ENCODE measurements at regions of chr20 and their contacts with region 1.

Region 1: GRCh38 chr20:63864847-63865640 is at the start of gene TPD52L2:
- DNase-seq: peak; percentile 100
- ATAC-seq: peak; percentile 82
- H3K4me3 ChIP-seq: peak within 1 kb of the TSS; percentile 98 to 100
- H3K27ac ChIP-seq: peak within 1 kb of the TSS; percentile 95
- H3K4me1 ChIP-seq: peaks cover 14 to 19% of the 10 kb centered on the region in 2 experiments
- H3K27me3 ChIP-seq: no peaks in the 10 kb centered on the region
- CTCF ChIP-seq: no peak
- POLR2A ChIP-seq: peak; percentile 77
- RAD21 ChIP-seq: no peak
- total RNA-seq, gene TPD52L2: 149 TPM

Region 2: DNA sequence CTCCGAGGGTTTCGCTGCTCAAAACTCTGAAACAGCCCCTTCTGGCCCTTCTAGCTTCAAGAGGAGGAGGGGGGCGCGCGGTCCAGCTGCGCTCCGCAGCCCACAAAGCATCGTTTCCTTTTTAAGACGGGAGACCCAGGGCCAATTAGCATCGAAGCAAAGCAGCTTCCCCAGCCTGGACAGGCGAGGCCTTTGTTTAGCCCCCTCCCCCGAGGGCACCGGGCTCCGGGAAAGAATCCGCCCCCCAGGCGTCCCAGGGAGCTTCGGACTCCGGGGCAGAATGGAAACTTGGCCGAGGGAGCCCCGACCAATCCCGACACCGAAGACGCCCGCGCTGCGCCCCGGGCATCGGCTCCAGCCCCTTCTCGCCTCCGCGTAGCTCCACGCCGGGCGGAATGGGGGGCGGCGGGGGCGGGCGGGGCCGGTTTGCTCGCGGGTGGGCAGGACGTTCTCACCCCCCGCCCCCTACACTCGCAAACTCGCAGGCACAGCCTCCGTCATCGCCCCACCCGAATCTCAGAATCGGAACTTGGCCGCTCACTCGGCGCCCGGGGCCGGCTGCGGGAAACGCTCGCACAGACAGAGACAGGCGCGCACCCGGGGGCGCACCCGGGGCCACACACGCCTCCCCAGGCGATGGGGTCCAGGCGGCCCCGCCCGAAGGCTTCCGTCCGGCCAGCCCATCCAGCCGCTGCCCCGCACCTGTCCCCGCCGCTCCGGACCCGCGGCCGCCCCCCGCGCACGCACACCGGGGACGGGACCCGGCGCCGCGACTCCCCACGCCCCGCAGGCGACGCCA is 611.4 kb before region 1 on chr20:
- CTCF ChIA-PET with region 1: no interaction called
- POLR2A ChIA-PET with region 1: no interaction called
- RAD21 ChIA-PET with region 1: no interaction called
- intact Hi-C with region 1: no loop called
- DNase-seq: no peak
- ATAC-seq: no peak
- H3K4me3 ChIP-seq: no peak overlapping the region
- H3K27ac ChIP-seq: no peak overlapping the region
- H3K4me1 ChIP-seq: no peaks in the 10 kb centered on the region
- H3K27me3 ChIP-seq: no peaks in the 10 kb centered on the region
- CTCF ChIP-seq: no peak
- POLR2A ChIP-seq: no peak
- RAD21 ChIP-seq: no peak

Region 3: DNA sequence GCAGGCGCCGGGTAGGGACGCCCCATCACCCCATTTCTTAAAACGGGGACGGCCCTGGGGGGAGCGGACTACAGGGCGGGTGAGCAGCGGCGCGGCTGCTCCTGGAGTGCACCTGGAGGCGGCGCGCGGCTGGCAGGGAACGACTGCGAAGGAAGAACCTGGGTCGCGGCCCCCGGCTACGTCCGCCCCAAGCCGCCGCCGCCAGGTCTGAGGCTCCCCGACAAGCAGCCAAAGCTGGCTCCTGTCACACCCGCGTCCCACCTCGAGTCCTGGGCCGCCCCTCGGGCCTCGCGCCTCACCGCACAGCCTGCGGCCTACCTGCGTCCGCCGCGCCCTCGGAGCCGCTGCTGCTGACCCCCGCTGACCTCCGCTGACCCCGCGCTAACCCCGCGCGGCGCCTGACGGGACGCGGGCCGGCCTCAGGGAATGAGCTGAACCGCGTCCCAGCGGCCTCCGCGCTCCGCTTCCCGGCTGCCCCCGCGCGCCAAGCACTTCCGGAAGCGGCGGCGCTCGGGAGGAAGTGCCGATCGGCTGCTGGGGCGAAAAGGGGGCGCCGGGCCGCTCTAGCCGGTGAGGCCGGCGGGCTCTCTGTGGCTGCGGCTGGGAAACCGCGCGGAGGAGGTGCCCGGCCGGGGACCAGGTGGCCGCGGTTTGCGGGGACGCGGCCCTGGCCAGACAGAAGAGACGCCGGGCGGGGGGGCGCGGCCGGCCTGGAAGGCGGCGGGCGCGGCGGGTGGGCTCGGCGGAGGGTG is 157.3 kb before region 1 on chr20 and contains the starts of genes ARFRP1 and ZGPAT:
- CTCF ChIA-PET with region 1: interaction called, 9 read pairs
- POLR2A ChIA-PET with region 1: interaction called, 15 read pairs
- RAD21 ChIA-PET with region 1: interaction called, 3 to 9 read pairs
- intact Hi-C with region 1: loop called (anchors 1 kb)
- DNase-seq: peak; percentile 47
- ATAC-seq: peak; percentile 85
- H3K4me3 ChIP-seq: peak within 1 kb of the TSS; percentile 85 to 96
- H3K27ac ChIP-seq: peak within 1 kb of the TSS; percentile 95
- H3K4me1 ChIP-seq: peaks cover 13 to 23% of the 10 kb centered on the region in 2 experiments
- H3K27me3 ChIP-seq: no peaks in the 10 kb centered on the region
- CTCF ChIP-seq: no peak
- POLR2A ChIP-seq: peak; percentile 53
- RAD21 ChIP-seq: no peak
- total RNA-seq, gene ARFRP1: 53.7 TPM
- total RNA-seq, gene ZGPAT: 30.6 TPM

Region 4: DNA sequence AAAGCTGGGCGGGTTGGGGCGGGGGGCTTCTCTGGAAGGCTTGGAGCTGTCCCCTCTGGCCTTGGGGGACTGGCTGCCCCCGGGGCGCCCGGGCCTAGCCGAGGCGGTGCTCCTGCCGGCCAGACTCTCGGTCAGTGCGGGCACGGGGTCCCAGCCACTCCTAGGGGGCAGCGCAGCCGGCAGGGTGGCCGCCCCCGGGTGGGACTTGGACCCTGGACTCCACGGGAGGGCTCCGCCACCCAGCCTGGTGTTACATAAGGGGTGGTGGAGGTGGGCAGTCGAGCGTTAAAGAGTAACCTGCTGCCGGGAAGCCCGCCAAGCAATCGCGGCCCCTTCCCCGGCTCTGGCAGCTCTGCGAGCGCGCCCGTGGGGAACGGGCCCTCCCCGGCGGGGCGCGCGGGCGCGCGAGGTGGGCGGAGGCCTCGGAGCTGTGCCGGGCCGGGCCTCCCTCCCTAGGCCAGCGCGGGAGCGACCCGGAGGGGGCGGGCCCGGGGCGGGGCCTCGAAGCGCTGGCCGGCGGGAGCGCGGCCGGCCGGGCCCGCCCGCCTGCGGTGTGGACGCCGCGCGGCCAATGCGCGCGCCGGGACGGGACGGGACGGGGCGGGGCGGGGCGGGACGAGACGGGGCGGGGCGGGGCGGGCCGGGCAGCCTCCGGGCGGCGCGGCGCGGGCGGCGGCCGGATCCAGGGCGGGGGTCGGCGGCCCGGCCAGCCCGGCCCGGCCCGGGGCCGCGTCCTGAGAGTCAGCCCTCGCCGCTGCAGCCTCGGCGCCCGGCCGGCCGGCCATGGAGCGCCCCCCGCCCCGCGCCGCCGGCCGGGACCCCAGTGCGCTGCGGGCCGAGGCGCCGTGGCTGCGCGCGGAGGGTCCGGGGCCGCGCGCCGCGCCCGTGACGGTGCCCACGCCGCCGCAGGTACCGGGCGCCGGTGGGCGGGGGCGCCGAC is 125.6 kb before region 1 on chr20 and contains the start of gene SLC2A4RG:
- CTCF ChIA-PET with region 1: interaction called, 5 read pairs
- POLR2A ChIA-PET with region 1: interaction called, 12 read pairs
- RAD21 ChIA-PET with region 1: no interaction called
- intact Hi-C with region 1: loop called (anchors 10 kb)
- DNase-seq: no peak
- ATAC-seq: peak; percentile 69
- H3K4me3 ChIP-seq: peak within 1 kb of the TSS; percentile 76 to 85
- H3K27ac ChIP-seq: peak within 1 kb of the TSS; percentile 96
- H3K4me1 ChIP-seq: peaks cover 20 to 50% of the 10 kb centered on the region in 2 experiments; a peak in 3 of 4 replicates
- H3K27me3 ChIP-seq: no peaks in the 10 kb centered on the region
- CTCF ChIP-seq: no peak
- POLR2A ChIP-seq: no peak
- RAD21 ChIP-seq: no peak
- total RNA-seq, gene SLC2A4RG: 121 TPM

Region 5: GRCh38 chr20:63782051-63782471 is 83.0 kb before region 1 on chr20:
- CTCF ChIA-PET with region 1: no interaction called
- POLR2A ChIA-PET with region 1: no interaction called
- RAD21 ChIA-PET with region 1: no interaction called
- intact Hi-C with region 1: loop called (anchors 2 kb)
- DNase-seq: peak; percentile 63
- ATAC-seq: peak; percentile 88
- H3K4me3 ChIP-seq: no peak overlapping the region
- H3K27ac ChIP-seq: peak overlapping the region; percentile 52
- H3K4me1 ChIP-seq: peaks cover 29 to 36% of the 10 kb centered on the region in 2 experiments
- H3K27me3 ChIP-seq: no peaks in the 10 kb centered on the region
- CTCF ChIP-seq: peak; percentile 39 to 48 (median 46); a peak in 5 of 6 replicates
- POLR2A ChIP-seq: no peak
- RAD21 ChIP-seq: peak; percentile 40

Measured in HCT116 (cell line).